ENCODE measurements at regions of chr7 and their contacts with region 1.

Region 1: GRCh38 chr7:5354460-5355232 is 69.0 kb downstream of the TNRC18 start:
- DNase-seq: no peak
- H3K4me3 ChIP-seq: no peak overlapping the region
- H3K4me1 ChIP-seq: no peaks in the 10 kb centered on the region
- H3K27me3 ChIP-seq: no peaks in the 10 kb centered on the region

Region 2: DNA sequence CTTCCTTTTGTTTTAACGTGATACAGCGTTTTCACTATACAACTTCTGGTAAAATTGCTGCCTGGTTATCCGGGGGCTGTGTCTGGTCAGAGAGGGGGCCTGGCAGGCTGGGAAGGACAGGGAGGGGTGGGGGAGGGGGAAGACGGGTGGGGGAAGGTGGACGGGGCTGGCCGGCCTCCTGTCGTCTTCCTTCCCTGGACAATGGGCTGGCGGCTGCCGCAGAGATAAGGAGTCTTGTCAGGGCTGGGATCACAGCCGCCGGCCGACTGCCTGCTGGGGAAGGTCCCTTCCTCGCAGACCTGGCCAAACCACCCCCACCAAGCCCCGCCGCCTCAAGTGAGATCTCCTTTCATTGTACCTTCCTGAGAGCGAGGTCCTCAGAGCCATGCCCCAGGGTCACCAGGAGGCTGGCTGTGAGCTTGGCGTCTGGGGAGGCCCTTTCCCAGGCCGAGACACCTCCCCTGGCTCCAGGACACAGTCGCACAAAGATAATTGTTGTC is 220.2 kb after region 1 on chr7:
- in situ Hi-C with region 1: no loop called
- DNase-seq: peak in 1 of 2 experiments; percentile 50
- H3K4me3 ChIP-seq: no peak overlapping the region
- H3K4me1 ChIP-seq: peaks cover 7% of the 10 kb centered on the region
- H3K27me3 ChIP-seq: no peaks in the 10 kb centered on the region

Region 3: DNA sequence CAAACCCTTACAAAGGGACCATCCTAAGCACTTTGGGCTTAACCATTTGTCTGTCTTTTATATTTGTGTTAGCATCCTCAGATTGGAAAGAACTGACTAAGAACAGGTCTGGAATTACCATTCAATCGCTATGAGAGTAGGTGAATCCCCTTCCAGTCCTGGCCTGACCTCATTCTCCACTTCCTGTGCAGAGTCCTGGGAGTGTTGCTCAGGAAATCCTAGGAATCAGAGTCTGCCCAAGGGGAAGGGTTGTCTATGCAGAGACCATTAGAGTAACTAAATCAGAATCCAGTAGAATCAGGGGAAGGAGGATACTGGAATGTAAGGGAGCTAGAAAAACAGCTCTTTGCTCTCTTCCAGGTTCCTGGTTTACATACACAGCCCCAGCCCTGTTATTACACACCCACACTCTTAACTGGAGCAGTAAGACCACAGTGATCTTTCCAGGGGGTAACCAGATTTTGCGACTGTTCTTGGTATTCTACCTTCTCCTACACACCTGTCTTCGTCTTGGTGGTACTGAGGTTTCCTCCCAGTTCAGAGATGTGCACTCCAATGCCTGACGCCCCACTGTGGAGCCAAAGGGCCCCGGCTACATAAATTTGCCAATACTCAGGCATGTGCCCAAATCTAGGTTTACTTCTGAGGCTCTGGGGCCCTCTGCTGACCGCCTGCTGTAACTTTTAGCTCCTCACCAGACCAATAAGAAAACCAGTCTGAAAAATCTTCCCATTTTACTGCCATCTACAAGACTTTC is 323.1 kb after region 1 on chr7:
- in situ Hi-C with region 1: loop called (anchors 25 kb)
- DNase-seq: peak; percentile 49 to 69
- H3K4me3 ChIP-seq: no peak overlapping the region
- H3K4me1 ChIP-seq: no peaks in the 10 kb centered on the region
- H3K27me3 ChIP-seq: no peaks in the 10 kb centered on the region